ENCODE measurements at regions of chr6 and their contacts with region 1.

Region 1: GRCh38 chr6:7166410-7167305 is 58.9 kb downstream of the RREB1 start:
- DNase-seq: no peak
- ATAC-seq: no peak
- H3K4me3 ChIP-seq: no peak overlapping the region
- H3K4me3 Mint-ChIP-seq: no peak overlapping the region
- H3K27ac ChIP-seq: no peak overlapping the region
- H3K27ac Mint-ChIP-seq: no peak overlapping the region
- H3K4me1 ChIP-seq: peaks cover 37 to 50% of the 10 kb centered on the region in 2 donors
- H3K4me1 Mint-ChIP-seq: peaks cover 79% of the 10 kb centered on the region
- H3K27me3 ChIP-seq: no peaks in the 10 kb centered on the region
- H3K27me3 Mint-ChIP-seq: no peaks in the 10 kb centered on the region
- CTCF ChIP-seq: no peak

Region 2: GRCh38 chr6:6610031-6610591 is 556.5 kb before region 1 on chr6:
- CTCF ChIA-PET with region 1: no interaction called
- POLR2A ChIA-PET with region 1: no interaction called
- intact Hi-C with region 1: no loop called
- DNase-seq: peak; percentile 84
- ATAC-seq: peak; percentile 95
- H3K4me3 ChIP-seq: peak overlapping the region in 3 of 5 experiments; percentile 1 to 20 (median 13)
- H3K4me3 Mint-ChIP-seq: peak overlapping the region; percentile 76
- H3K27ac ChIP-seq: peak overlapping the region; percentile 77 to 91
- H3K27ac Mint-ChIP-seq: peak overlapping the region; percentile 95
- H3K4me1 ChIP-seq: peaks cover 52 to 57% of the 10 kb centered on the region in 2 donors
- H3K4me1 Mint-ChIP-seq: peaks cover 80% of the 10 kb centered on the region
- H3K27me3 ChIP-seq: no peaks in the 10 kb centered on the region
- H3K27me3 Mint-ChIP-seq: no peaks in the 10 kb centered on the region
- CTCF ChIP-seq: no peak

Region 3: GRCh38 chr6:7067305-7067704 is 99.4 kb before region 1 on chr6:
- CTCF ChIA-PET with region 1: no interaction called
- POLR2A ChIA-PET with region 1: no interaction called
- intact Hi-C with region 1: no loop called
- DNase-seq: no peak
- ATAC-seq: no peak
- H3K4me3 ChIP-seq: no peak overlapping the region
- H3K4me3 Mint-ChIP-seq: no peak overlapping the region
- H3K27ac ChIP-seq: no peak overlapping the region
- H3K27ac Mint-ChIP-seq: no peak overlapping the region
- H3K4me1 ChIP-seq: no peaks in the 10 kb centered on the region
- H3K4me1 Mint-ChIP-seq: no peaks in the 10 kb centered on the region
- H3K27me3 ChIP-seq: no peaks in the 10 kb centered on the region
- H3K27me3 Mint-ChIP-seq: no peaks in the 10 kb centered on the region
- CTCF ChIP-seq: no peak

Region 4: DNA sequence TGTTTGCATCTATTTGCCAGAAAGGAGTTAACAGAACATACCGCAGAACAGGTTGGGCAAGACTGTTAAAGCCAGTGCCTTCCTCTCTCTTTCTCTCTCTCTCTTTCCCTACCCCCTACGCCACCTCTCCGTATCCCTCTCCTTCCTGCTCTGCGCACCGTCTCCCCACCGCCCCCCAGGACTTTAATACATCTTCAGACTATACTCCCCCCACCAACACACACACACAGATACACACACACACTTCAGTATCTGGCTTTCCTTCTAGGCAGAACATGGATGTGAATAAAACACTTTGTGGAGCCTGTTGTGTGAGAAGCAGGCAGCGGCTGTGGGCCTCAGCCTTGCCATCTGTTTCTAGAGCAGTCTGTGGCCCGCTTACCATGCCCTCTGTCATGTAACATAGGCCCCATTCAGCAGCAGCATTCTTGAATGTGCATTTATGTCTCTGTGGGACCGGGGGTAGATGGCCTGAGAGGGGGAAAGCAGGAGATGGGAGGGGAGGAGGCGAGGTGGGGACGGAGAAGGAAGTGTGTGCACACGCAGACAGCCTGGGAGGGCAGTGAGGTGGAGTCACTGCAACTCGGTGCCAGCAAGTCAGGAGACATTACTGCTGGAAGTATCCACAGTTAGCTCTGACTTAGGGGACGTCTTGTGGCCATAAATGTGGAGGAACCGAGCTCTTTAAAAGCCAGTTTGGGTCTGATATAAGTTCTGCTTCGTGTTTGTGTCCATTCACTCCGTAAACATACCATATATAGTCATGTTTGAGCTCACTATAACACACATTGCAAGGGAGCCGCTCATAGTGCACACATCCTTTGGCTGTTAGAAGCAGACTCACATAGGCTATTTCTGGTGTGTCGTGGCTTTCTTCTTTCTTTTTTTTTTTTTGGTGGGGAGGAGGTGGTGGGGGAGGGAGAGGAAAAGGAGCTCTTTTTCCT is 20.5 kb before region 1 on chr6:
- CTCF ChIA-PET with region 1: no interaction called
- POLR2A ChIA-PET with region 1: interaction called, 10 read pairs
- intact Hi-C with region 1: no loop called
- DNase-seq: peak; percentile 50
- ATAC-seq: peak; percentile 59
- H3K4me3 ChIP-seq: peak overlapping the region in 4 of 5 experiments; percentile 3 to 32 (median 20)
- H3K4me3 Mint-ChIP-seq: peak overlapping the region; percentile 78
- H3K27ac ChIP-seq: peak overlapping the region in 1 of 2 donors; percentile 26
- H3K27ac Mint-ChIP-seq: peak overlapping the region; percentile 69
- H3K4me1 ChIP-seq: peaks cover 33 to 44% of the 10 kb centered on the region in 2 donors
- H3K4me1 Mint-ChIP-seq: peaks cover 72% of the 10 kb centered on the region
- H3K27me3 ChIP-seq: no peaks in the 10 kb centered on the region
- H3K27me3 Mint-ChIP-seq: no peaks in the 10 kb centered on the region
- CTCF ChIP-seq: no peak

Region 5: DNA sequence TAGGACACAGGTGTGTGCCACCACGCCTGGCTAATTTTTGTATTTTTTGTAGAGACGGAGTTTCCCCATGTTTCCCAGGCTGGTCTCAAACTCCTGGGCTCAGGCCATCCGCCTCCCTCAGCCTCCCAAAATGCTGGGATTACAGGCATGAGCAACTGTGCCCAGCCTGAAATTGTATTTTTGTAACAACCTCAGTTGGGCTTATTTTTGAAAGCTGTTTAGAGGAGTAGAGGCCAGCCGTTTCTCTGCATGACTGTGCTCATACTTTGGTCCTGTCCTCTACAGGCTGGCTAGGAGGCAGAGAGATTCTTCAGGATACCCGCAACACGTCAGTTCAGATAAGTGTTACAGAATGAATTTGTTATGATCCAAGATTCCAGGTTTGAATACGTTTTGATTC is 200.8 kb after region 1 on chr6:
- CTCF ChIA-PET with region 1: no interaction called
- POLR2A ChIA-PET with region 1: no interaction called
- intact Hi-C with region 1: no loop called
- DNase-seq: no peak
- ATAC-seq: no peak
- H3K4me3 ChIP-seq: no peak overlapping the region
- H3K4me3 Mint-ChIP-seq: no peak overlapping the region
- H3K27ac ChIP-seq: no peak overlapping the region
- H3K27ac Mint-ChIP-seq: no peak overlapping the region
- H3K4me1 ChIP-seq: no peaks in the 10 kb centered on the region
- H3K4me1 Mint-ChIP-seq: no peaks in the 10 kb centered on the region
- H3K27me3 ChIP-seq: no peaks in the 10 kb centered on the region
- H3K27me3 Mint-ChIP-seq: peaks cover 8% of the 10 kb centered on the region
- CTCF ChIP-seq: no peak